ENCODE measurements at regions of chr1 and their contacts with region 1.

Region 1: DNA sequence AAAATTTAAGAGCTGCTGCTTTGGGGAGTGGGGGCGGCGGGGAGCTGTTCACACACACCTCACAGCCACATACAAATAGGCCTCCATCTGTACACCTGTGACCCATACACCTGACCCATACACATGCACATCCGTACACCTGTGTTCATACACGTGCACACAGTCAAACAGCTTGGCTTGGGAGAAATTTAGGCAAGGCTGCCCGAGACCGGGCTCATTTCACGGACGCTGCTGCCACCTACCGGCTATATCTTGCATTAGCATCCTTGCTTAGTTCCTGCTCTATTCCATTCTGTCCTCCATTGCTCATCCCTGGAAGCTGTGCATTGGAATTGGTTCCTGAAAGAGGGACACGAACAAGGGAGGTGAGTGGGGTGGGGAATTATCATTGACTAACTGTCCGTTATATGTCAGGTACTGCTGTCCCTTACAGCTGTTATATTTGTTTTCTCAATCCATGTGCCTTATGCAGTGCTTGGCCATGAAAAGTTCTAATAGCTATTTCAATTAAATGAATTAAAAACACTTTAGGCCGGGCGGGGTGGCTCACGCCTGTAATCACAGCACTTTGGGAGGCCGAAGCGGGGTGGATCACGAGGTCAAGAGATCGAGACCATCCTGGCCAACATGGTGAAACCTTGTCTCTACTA is 37.1 kb upstream of the EPB41 start:
- DNase-seq: peak; percentile 83
- ATAC-seq: peak; percentile 90
- H3K4me3 Mint-ChIP-seq: no peak overlapping the region
- H3K27ac Mint-ChIP-seq: no peak overlapping the region
- H3K4me1 Mint-ChIP-seq: peaks cover 6% of the 10 kb centered on the region
- H3K27me3 Mint-ChIP-seq: peaks cover 7% of the 10 kb centered on the region

Region 2: DNA sequence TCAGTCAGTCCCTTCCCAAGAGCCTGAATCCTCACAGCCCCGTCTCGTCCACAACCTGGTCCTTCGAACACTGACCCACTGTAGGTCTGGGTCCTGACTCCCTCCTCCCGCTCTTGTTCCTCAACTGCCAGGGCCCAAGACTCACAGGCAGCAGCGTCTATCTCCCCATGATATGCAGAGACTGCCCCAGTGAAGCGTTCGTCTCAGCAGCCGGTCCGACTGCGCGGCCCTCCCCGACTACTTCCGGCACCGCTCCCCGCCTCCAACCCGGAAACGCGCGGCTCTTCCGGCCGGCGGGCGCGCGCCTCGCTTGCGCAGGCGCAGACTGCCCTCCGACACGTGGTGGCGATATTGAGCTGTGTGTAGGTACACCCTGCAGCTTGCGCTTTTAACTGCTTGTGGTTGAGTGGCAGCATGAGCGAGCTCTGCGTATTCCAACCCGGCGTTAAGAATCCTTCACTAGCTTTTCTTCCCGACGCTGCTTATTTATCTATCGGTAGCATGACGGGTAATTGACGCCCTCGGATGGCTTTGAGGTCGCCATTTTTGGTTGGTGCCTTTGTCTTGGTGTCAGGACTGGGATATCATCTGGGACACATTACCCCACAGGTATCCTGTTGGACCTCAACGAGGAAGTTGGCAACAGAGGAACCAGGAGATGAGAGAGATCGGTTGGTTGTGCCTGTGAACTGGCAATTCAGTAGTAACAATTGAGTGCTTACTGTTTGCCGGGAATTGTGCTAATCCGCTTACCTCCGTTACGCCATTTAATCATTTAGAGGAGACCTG is 234.2 kb before region 1 on chr1 and contains the start of gene TAF12:
- CTCF ChIA-PET with region 1: interaction called, 30 read pairs
- POLR2A ChIA-PET with region 1: interaction called, 6 read pairs
- DNase-seq: peak; percentile 94
- ATAC-seq: peak; percentile 90
- H3K4me3 Mint-ChIP-seq: peak within 1 kb of the TSS; percentile 99
- H3K27ac Mint-ChIP-seq: peak within 1 kb of the TSS; percentile 99
- H3K4me1 Mint-ChIP-seq: peaks cover 51% of the 10 kb centered on the region
- H3K27me3 Mint-ChIP-seq: no peaks in the 10 kb centered on the region
- total RNA-seq, gene TAF12: 35.7 to 39.3 TPM

Region 3: GRCh38 chr1:28775121-28775944 is 101.9 kb before region 1 on chr1:
- CTCF ChIA-PET with region 1: interaction called, 167 read pairs
- POLR2A ChIA-PET with region 1: interaction called, 3 read pairs
- DNase-seq: peak; percentile 71
- ATAC-seq: peak; percentile 95
- H3K4me3 Mint-ChIP-seq: peak overlapping the region; percentile 63
- H3K27ac Mint-ChIP-seq: peak overlapping the region; percentile 43
- H3K4me1 Mint-ChIP-seq: peaks cover 11% of the 10 kb centered on the region
- H3K27me3 Mint-ChIP-seq: peaks cover 3% of the 10 kb centered on the region

Region 4: GRCh38 chr1:28865997-28866650 is 11.1 kb before region 1 on chr1:
- CTCF ChIA-PET with region 1: interaction called, 15 read pairs
- POLR2A ChIA-PET with region 1: no interaction called
- DNase-seq: no peak
- ATAC-seq: no peak
- H3K4me3 Mint-ChIP-seq: no peak overlapping the region
- H3K27ac Mint-ChIP-seq: no peak overlapping the region
- H3K4me1 Mint-ChIP-seq: no peaks in the 10 kb centered on the region
- H3K27me3 Mint-ChIP-seq: peaks cover 7% of the 10 kb centered on the region

Region 5: GRCh38 chr1:29181413-29182225 is 304.4 kb after region 1 on chr1 and contains the start of gene SRSF4:
- CTCF ChIA-PET with region 1: interaction called, 13 read pairs
- POLR2A ChIA-PET with region 1: interaction called, 4 read pairs
- DNase-seq: peak; percentile 99
- ATAC-seq: peak; percentile 91
- H3K4me3 Mint-ChIP-seq: peak within 1 kb of the TSS; percentile 96
- H3K27ac Mint-ChIP-seq: peak within 1 kb of the TSS; percentile 97
- H3K4me1 Mint-ChIP-seq: peaks cover 48% of the 10 kb centered on the region
- H3K27me3 Mint-ChIP-seq: no peaks in the 10 kb centered on the region
- total RNA-seq, gene SRSF4: 122 to 124 TPM